ENCODE measurements at regions of chr2 and their contacts with region 1.

Region 1: GRCh38 chr2:238462782-238463396 is 36.2 kb downstream of the ASB1 start:
- DNase-seq: no peak
- ATAC-seq: no peak
- H3K4me3 ChIP-seq: no peak overlapping the region
- H3K27ac ChIP-seq: no peak overlapping the region
- H3K4me1 ChIP-seq: peaks cover 4 to 18% (median 12%) of the 10 kb centered on the region in 12 donors
- H3K27me3 ChIP-seq: no peaks in the 10 kb centered on the region
- CTCF ChIP-seq: peak; percentile 63 to 78 (median 68)
- POLR2A ChIP-seq: no peak

Region 2: DNA sequence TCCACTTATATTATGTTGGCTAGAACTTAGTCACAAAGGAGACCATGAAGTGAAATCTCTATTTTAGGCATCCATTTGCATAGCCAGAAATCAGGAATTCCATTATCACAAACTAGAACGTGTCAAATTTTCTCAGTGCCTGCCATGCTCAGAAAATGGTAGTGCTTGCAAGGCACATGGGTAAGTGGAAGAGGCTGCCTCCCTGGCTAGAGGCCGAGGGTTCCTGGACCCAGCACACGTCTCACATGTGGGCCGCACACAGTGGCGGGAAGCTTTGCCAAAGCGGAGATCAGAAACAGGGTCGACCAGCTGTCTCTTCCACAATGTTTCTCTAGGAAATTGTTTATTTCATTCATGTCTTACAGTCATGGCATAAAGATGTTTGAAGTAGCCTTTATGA is 100.3 kb before region 1 on chr2:
- intact Hi-C with region 1: loop called in 5 of 10 experiments (anchors 5 kb)
- DNase-seq: no peak
- ATAC-seq: peak in 1 of 4 donors; percentile 13
- H3K4me3 ChIP-seq: no peak overlapping the region
- H3K27ac ChIP-seq: no peak overlapping the region
- H3K4me1 ChIP-seq: peaks cover 0 to under 1% (median 0%) of the 10 kb centered on the region in 12 donors
- H3K27me3 ChIP-seq: no peaks in the 10 kb centered on the region
- CTCF ChIP-seq: no peak
- POLR2A ChIP-seq: no peak

Region 3: DNA sequence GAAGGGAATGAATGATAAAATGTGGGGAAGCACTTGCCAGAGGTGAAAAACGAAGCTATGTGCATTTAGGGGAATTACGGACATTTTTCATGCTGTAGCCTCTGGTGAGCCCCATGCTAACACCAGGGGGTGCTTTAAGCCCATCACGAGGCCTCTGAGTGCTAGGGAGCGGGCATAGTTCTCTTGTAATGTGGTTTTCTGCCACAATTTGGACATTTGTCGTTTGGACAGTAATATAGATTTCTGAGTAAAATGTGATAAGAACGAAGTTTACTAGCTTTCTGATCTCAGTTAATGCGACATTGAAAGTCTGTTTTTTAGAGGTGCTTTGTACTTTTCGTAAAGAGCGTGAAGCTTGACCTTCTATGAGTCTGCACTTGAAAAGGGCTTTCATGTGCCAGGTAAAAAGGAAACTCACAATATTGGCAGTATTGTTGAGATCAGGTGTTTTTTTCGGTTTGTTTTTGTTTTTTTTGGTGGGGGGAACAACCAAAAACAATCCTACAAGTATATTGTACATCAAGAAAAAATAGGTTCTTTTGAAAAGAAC is 92.0 kb before region 1 on chr2:
- intact Hi-C with region 1: loop called in 9 of 10 experiments (anchors 1 to 5 kb)
- DNase-seq: peak; percentile 46 to 72 (median 53)
- ATAC-seq: peak; percentile 83 to 97 (median 94)
- H3K4me3 ChIP-seq: no peak overlapping the region
- H3K27ac ChIP-seq: no peak overlapping the region
- H3K4me1 ChIP-seq: no peaks in the 10 kb centered on the region
- H3K27me3 ChIP-seq: no peaks in the 10 kb centered on the region
- CTCF ChIP-seq: peak; percentile 34 to 85 (median 78)
- POLR2A ChIP-seq: no peak

Region 4: GRCh38 chr2:238397356-238397755 is 65.5 kb before region 1 on chr2:
- intact Hi-C with region 1: no loop called
- DNase-seq: no peak
- ATAC-seq: no peak
- H3K4me3 ChIP-seq: no peak overlapping the region
- H3K27ac ChIP-seq: no peak overlapping the region
- H3K4me1 ChIP-seq: no peaks in the 10 kb centered on the region
- H3K27me3 ChIP-seq: no peaks in the 10 kb centered on the region
- CTCF ChIP-seq: no peak
- POLR2A ChIP-seq: no peak

Measured in heart left ventricle (tissue), 16 donors.